ENCODE measurements at regions of chr5 and their contacts with region 1.

Region 1: GRCh38 chr5:158354958-158355357 is 496.0 kb upstream of the CLINT1 start:
- DNase-seq: no peak
- H3K4me3 Mint-ChIP-seq: no peak overlapping the region
- H3K27ac Mint-ChIP-seq: no peak overlapping the region
- H3K4me1 Mint-ChIP-seq: peaks cover 8% of the 10 kb centered on the region
- H3K27me3 Mint-ChIP-seq: peaks cover 10% of the 10 kb centered on the region

Region 2: GRCh38 chr5:158406884-158407823 is 52.2 kb after region 1 on chr5:
- CTCF ChIA-PET with region 1: no interaction called
- POLR2A ChIA-PET with region 1: no interaction called
- intact Hi-C with region 1: loop called (anchors 1 kb)
- DNase-seq: no peak
- H3K4me3 Mint-ChIP-seq: no peak overlapping the region
- H3K27ac Mint-ChIP-seq: no peak overlapping the region
- H3K4me1 Mint-ChIP-seq: peaks cover 3% of the 10 kb centered on the region
- H3K27me3 Mint-ChIP-seq: peaks cover 1% of the 10 kb centered on the region

Measured in activated CD4-positive, alpha-beta memory T cell treated with anti-CD3 and anti-CD28 coated beads for 36 hours (primary cell).